ENCODE measurements at regions of chr10 and their contacts with region 1.

Region 1: DNA sequence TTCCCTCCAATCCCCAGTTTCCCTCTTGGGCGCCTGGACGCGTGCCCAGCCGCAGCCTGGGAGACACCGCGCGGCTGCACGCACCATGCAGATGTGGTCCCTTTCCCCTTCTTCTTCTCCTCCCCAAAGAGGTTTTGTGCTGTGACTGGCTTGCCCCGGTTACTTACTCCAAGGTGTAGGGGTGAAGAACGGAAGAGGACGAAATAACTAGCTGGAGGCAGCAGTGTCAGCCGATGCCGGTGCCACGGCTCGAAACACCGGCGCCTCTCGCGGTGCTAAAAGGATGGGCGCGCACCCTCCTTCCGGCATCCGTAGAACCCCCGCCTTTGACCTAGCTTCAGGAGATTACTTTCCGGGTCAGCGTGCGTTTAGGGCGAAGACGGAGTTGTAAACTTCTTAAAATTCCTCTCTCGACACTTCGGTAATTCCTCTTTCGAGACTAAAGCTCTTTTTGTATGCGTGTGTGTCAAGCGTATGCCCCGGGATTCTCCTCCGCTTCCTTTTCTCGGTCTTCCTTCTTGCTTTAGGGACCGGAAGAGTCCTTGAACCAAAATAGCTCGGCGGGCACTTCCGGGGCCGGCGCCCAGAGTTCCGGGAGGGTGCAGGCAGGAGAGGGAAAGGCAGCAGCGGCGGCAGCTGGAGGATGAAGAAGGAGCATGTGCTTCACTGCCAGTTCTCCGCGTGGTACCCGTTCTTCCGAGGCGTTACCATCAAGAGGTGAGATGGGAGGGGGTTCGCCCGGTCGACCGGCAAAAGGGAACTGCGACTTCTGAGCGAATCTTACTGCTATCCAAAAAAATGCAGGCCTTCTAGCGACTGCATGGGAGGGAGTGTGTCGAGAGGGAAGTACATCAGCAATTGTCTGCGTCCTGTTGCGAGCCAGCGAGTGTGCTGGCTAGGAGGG is at the starts of genes CDC123 and NUDT5:
- DNase-seq: peak; percentile 93
- H3K4me3 Mint-ChIP-seq: peak within 1 kb of the TSS; percentile 96
- H3K27ac Mint-ChIP-seq: peak within 1 kb of the TSS; percentile 98
- H3K4me1 Mint-ChIP-seq: peaks cover 58% of the 10 kb centered on the region
- H3K27me3 Mint-ChIP-seq: no peaks in the 10 kb centered on the region
- total RNA-seq, gene CDC123: 108 to 117 TPM
- total RNA-seq, gene NUDT5: 97.1 to 100 TPM

Region 2: DNA sequence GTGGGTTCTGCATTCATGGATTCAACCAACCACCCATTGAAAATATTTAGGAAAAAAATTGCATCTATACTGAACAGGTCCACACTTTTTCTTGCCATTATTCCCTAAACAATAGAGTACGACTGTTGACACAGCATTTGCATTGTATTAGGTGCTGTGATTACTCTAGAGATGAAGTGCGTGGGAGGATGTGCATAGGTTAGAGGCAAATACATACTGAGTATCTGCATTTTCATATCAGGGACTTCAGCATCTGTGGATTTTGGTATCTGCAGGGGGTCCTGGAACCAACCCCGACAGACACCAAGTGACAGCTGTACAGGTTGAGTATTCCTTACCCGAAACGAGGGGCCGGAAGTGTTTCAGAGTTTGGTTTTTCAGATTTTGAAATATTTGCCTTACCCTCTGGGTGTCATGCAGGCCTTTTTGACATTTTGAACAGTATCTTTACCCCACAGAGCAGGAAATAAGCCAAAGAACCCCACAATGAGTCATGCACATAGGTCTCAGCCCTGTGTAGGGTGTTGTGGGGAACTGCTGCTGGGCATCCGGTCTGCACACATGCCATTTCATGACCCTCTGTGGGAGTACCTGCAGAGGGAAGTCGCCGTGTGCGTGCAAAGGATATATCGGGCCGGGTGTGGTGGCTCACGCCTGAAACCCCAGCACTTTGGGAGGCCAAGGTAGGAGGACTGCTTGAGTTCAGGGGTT is 14.6 kb before region 1 on chr10:
- CTCF ChIA-PET with region 1: interaction called, 3 read pairs
- intact Hi-C with region 1: loop called (anchors 1 kb)
- DNase-seq: peak; percentile 74
- H3K4me3 Mint-ChIP-seq: no peak overlapping the region
- H3K27ac Mint-ChIP-seq: peak overlapping the region; percentile 81
- H3K4me1 Mint-ChIP-seq: peaks cover 17% of the 10 kb centered on the region
- H3K27me3 Mint-ChIP-seq: no peaks in the 10 kb centered on the region

Region 3: DNA sequence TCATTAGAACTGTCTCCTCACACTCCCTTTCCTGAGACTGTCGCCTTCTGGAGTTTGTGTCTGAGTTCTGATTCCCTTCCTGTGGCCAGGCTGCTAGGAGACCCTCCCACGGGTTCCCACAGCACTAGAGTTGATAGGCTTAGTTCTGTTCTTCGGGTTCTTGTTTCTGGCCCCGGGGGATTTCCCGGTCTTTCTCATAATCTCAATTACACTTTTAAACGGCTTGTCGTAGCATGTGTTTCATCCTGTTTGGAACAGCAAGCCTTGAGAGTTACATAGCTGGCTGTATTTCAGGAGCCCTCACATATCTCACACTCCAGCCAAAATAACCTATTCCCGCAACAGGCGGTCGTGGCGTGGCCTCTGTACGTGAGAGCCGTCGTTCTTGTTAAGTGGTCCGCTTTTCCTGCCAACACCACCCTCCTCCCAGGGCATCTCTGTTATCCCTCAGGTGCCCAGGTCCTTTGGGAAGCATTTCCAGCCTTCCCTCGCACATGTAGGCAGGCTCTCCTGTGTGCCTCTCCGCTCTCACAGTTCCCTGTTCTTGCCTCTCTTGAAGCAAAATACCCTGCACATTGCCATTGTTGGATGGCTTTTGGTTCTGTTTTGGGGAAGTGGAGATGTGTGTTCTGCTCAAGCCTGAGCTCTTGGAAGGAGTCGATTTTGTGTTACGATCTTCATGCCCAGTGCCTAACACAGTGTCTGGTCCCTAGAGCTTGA is 46.1 kb after region 1 on chr10:
- CTCF ChIA-PET with region 1: no interaction called
- intact Hi-C with region 1: loop called (anchors 1 kb)
- DNase-seq: peak; percentile 84
- H3K4me3 Mint-ChIP-seq: peak overlapping the region; percentile 36
- H3K27ac Mint-ChIP-seq: peak overlapping the region; percentile 85
- H3K4me1 Mint-ChIP-seq: peaks cover 27% of the 10 kb centered on the region
- H3K27me3 Mint-ChIP-seq: no peaks in the 10 kb centered on the region